HepG2 (cell line): ENCODE measurements at regions of chr14 and their contacts with region 1.

Region 1: GRCh38 chr14:44961604-44962333 is at the starts of genes KLHL28 and TOGARAM1:
- DNase-seq: peak; percentile 100
- ATAC-seq: peak; percentile 90
- H3K4me3 ChIP-seq: peak within 1 kb of the TSS; percentile 83 to 88 (median 84)
- H3K27ac ChIP-seq: peak within 1 kb of the TSS; percentile 84
- H3K4me1 ChIP-seq: peaks cover 34% of the 10 kb centered on the region
- H3K27me3 ChIP-seq: no peaks in the 10 kb centered on the region; a peak in 1 of 5 replicates
- CTCF ChIP-seq: no peak; the same call in 1 of the 2 replicates
- EP300 ChIP-seq: peak in 1 of 2 experiments; percentile 46; a peak in 2 of 4 replicates
- POLR2A ChIP-seq: peak; percentile 94 to 95
- RAD21 ChIP-seq: 0 out of 2 replicates have a peak, but pooled peaks have one; percentile 44
- total RNA-seq, gene KLHL28: 6.6 and 9.8 TPM in 2 replicates
- total RNA-seq, gene TOGARAM1: 9.8 and 10.6 TPM in 2 replicates

Region 2: DNA sequence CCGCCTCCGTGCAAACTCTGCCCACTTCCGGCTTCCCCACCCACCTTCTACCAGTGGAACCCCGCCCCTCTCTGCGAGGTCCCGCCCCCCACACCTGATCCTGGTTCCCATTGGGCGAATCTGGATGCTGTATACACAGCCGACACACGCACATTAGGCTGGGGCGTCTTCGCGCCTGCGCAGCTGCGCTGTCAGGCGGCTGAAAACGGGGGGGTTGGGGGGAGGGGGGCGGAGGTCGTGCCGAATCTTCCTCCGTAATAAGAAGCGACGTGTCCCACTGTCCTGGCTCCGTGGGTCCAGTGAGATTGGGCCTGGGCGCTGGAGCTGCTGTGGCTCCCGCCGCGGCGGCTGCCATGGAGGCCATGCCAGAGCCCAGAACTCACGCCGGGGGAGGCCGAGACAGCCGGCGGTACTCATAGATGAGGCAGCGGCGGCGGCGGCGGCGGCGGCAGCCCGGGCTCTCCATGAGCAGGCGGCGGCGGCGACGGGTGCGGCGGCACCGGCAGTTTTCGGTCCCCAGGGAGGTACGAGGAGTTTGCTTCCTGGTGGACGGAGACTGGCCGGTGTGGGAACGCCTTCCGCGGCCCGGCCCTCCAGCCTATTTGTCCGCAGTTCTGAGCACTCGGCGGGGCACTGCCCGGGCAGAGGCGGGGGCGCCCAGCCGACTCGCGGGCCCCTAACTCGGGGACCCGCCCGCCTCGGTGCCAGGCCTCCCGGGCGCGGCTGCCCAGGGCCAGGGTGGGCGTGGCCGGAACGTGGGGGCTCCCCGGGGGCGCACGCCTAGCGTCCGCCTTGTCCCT is 64.5 kb before region 1 on chr14:
- CTCF ChIA-PET with region 1: no interaction called
- POLR2A ChIA-PET with region 1: interaction called, 14 read pairs
- in situ Hi-C with region 1: no loop called
- intact Hi-C with region 1: loop called (anchors 1 kb)
- DNase-seq: peak; percentile 94
- ATAC-seq: peak; percentile 94
- H3K4me3 ChIP-seq: peak overlapping the region; percentile 83 to 87 (median 87)
- H3K27ac ChIP-seq: peak overlapping the region; percentile 98
- H3K4me1 ChIP-seq: peaks cover 32% of the 10 kb centered on the region
- H3K27me3 ChIP-seq: no peaks in the 10 kb centered on the region
- CTCF ChIP-seq: no peak
- EP300 ChIP-seq: no peak
- POLR2A ChIP-seq: peak; percentile 86 to 88
- RAD21 ChIP-seq: peak; percentile 36; the same call in 1 of the 2 replicates

Region 3: GRCh38 chr14:45083971-45084722 is 122.4 kb after region 1 on chr14 and contains the start of gene PRPF39:
- CTCF ChIA-PET with region 1: no interaction called
- POLR2A ChIA-PET with region 1: interaction called, 4 read pairs
- in situ Hi-C with region 1: no loop called
- intact Hi-C with region 1: loop called (anchors 2 kb)
- DNase-seq: peak; percentile 87
- ATAC-seq: peak; percentile 92
- H3K4me3 ChIP-seq: peak within 1 kb of the TSS; percentile 81 to 91 (median 90)
- H3K27ac ChIP-seq: peak within 1 kb of the TSS; percentile 77
- H3K4me1 ChIP-seq: peaks cover 62% of the 10 kb centered on the region
- H3K27me3 ChIP-seq: no peaks in the 10 kb centered on the region
- CTCF ChIP-seq: 0 out of 2 replicates have a peak, but pooled peaks have one; percentile 9
- EP300 ChIP-seq: no peak
- POLR2A ChIP-seq: peak; percentile 92 to 98
- RAD21 ChIP-seq: peak; percentile 53
- total RNA-seq, gene PRPF39: 28.8 and 44.2 TPM in 2 replicates

Region 4: DNA sequence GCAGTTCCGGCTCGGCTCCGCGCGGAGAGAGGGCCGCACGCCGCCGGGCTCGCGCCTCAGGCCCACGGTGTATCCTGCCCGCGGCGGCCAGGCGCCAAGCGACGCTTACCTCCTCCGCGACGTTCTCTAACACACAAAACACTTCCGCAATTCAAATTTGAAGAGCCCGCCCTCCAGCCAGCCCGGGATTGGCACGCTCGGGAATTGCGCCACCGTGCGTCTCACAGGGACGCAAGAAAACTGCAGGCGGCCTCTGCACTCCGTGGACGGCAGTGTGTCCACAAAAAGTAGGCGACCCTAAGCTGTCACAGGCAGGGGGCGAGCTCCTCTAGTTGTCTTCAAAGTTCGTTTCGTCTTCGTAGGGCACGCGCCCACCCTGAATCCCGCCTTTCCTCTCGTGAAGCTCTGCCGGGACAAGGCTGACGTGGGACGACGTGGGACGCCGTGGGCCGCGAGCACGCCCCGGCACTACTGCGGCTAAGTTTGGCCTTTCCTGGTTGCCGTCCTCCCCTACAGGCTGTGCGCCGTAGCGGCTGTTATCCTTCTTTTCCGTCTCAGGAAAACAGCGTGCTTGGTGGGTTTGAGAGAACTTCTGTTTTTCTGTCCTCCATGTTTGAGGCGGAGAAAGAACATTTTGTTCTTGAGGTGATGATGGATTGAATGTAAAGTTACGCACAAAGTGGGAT is 291.4 kb after region 1 on chr14 and contains the start of gene MIS18BP1:
- CTCF ChIA-PET with region 1: no interaction called
- POLR2A ChIA-PET with region 1: interaction called, 8 read pairs
- in situ Hi-C with region 1: no loop called
- intact Hi-C with region 1: loop called (anchors 2 kb)
- DNase-seq: peak; percentile 96
- ATAC-seq: peak; percentile 95
- H3K4me3 ChIP-seq: peak within 1 kb of the TSS; percentile 89 to 100 (median 91)
- H3K27ac ChIP-seq: peak within 1 kb of the TSS; percentile 97
- H3K4me1 ChIP-seq: peaks cover 36% of the 10 kb centered on the region
- H3K27me3 ChIP-seq: no peaks in the 10 kb centered on the region; a peak in 1 of 5 replicates
- CTCF ChIP-seq: peak; percentile 87
- EP300 ChIP-seq: peak; percentile 7 to 26; a peak in 2 of 4 replicates
- POLR2A ChIP-seq: peak; percentile 64 to 78
- RAD21 ChIP-seq: no peak; the same call in none of the 2 replicates
- total RNA-seq, gene MIS18BP1: 36.4 and 54.6 TPM in 2 replicates